ENCODE measurements at regions of chr2 and their contacts with region 1.

Region 1: DNA sequence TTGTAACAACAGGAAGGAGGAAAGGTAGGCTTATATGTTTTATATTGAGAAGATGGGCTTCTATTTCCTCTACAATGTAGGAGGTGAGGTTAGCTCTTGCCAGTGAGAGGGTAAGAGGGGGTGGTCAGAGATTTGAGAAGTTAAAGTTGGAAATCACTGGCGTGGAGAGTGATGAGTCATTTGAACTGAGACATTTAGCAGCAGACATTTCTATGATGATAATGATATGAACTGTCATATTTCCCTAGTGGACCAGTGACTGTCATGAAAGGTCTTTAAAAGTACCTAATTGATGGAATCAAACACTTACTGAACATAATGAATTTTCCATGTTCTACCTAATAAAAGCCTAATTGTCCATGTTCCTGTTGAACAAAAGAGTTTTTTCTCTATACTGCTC is 126.1 kb downstream of the FAM161A start:
- DNase-seq: no peak
- H3K4me3 Mint-ChIP-seq: no peak overlapping the region
- H3K27ac Mint-ChIP-seq: no peak overlapping the region
- H3K4me1 Mint-ChIP-seq: no peaks in the 10 kb centered on the region
- H3K27me3 Mint-ChIP-seq: no peaks in the 10 kb centered on the region
- CTCF ChIP-seq: no peak

Region 2: DNA sequence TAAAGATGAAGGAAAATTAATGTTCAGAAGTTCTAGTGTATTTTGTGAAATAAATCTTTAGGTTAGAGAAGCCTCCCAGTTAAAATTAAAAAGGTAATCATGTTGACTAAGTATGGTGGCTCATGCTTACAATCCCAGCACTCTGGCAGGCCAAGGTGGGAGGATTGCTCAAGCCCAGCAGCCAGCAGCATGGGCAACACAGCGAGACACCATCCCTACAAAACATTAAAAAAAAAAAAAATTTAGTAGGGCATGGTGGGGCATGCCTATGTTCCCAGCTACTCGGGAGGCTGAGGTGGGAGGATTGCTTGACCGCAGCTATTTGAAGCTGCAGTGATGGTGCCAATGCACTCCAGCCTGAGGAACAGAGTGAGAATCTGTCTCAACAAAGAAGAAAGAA is 207.5 kb before region 1 on chr2:
- CTCF ChIA-PET with region 1: no interaction called
- intact Hi-C with region 1: no loop called
- DNase-seq: no peak
- H3K4me3 Mint-ChIP-seq: no peak overlapping the region
- H3K27ac Mint-ChIP-seq: no peak overlapping the region
- H3K4me1 Mint-ChIP-seq: no peaks in the 10 kb centered on the region
- H3K27me3 Mint-ChIP-seq: no peaks in the 10 kb centered on the region
- CTCF ChIP-seq: no peak

Region 3: DNA sequence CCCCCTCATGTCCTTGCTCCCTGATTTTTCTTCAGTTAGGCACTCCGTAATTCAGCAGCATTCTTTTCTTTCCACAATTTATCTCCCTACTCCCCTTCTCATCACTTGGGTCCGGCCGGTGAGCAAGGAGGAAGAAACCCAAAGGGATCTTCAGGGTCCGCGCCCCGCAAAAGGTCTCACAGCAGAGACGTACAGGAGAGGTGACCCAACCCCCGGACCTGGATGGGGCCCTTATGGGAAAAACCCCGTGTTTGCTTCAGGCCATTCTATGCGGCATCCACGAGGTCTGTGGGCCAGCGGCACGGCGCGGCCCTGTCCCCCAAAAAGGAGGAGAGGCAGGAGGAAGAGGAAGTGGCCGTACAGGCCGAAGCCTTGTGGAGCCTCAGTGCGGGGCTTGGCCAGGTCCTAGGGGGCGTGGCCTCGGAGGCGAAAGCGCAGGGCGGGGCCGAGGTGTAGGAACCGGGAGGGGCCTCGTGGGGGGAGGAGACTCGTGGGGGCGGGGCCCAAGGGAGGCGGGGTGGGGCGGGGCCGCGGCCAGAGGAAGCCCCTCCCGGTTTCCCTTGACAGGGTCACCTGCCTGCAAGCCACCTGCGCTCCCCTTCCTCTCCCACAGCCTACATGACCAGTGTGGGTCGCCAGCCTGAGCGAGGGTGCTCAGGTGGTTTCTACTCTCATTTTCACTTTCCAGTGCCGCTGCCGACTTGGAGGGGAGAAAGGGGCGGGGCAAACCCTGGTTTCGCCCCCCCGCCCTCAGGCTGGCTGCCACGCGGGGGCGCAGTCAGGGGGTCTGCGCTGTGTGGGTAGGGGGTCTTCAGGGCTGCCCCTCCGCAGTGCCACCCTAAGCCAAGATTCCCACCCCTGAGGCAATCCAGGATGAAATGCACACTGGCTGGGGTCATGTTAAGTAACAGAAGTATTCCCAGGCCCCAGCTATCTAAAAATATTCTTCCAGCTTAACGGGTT is 33.2 kb before region 1 on chr2:
- CTCF ChIA-PET with region 1: no interaction called
- intact Hi-C with region 1: no loop called
- DNase-seq: peak; percentile 97
- H3K4me3 Mint-ChIP-seq: peak overlapping the region; percentile 70
- H3K27ac Mint-ChIP-seq: peak overlapping the region; percentile 50
- H3K4me1 Mint-ChIP-seq: peaks cover 7% of the 10 kb centered on the region
- H3K27me3 Mint-ChIP-seq: no peaks in the 10 kb centered on the region
- CTCF ChIP-seq: peak; percentile 60

Region 4: GRCh38 chr2:61950571-61951315 is 223.0 kb after region 1 on chr2:
- CTCF ChIA-PET with region 1: interaction called, 10 read pairs
- intact Hi-C with region 1: no loop called
- DNase-seq: no peak
- H3K4me3 Mint-ChIP-seq: no peak overlapping the region
- H3K27ac Mint-ChIP-seq: peak overlapping the region; percentile 30
- H3K4me1 Mint-ChIP-seq: peaks cover 16% of the 10 kb centered on the region
- H3K27me3 Mint-ChIP-seq: no peaks in the 10 kb centered on the region
- CTCF ChIP-seq: no peak